ENCODE measurements at regions of chr20 and their contacts with region 1.

Region 1: GRCh38 chr20:63520504-63520933 is at the start of gene PPDPF:
- DNase-seq: peak; percentile 39 to 88
- H3K4me3 ChIP-seq: peak within 1 kb of the TSS; percentile 66 to 99 (median 88)
- H3K27ac ChIP-seq: peak within 1 kb of the TSS; percentile 87
- H3K4me1 ChIP-seq: peaks cover 0 to 21% (median 10%) of the 10 kb centered on the region in 4 experiments; a peak in 5 of 7 replicates
- H3K27me3 ChIP-seq: peaks cover 0 to 6% (median under 1%) of the 10 kb centered on the region in 4 experiments; a peak in 2 of 7 replicates
- CTCF ChIP-seq: no peak
- EP300 ChIP-seq: no peak
- POLR2A ChIP-seq: peak; percentile 70 to 87
- RAD21 ChIP-seq: no peak
- total RNA-seq, gene PPDPF: 125 and 138 TPM in 2 replicates

Region 2: DNA sequence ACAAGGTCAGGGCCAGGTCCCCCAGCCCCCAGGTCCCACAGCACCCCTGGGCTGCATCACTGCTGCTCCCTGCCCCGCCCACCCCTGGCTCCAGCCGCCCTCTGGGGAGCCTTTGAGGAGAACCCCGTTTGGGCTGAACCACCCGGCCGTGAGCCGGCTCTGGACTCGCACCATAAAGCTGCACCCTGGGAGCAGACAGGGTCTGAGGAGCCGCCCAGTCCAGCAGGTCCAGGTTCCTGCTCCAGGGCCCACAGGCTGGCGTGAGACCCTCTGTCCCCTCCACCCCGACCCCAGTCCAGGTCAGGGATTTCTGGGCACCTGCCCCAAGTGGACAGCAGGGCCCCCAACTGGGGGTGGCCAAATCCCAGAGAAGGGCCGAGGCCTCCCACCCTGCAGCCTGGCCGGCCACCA is 167.7 kb before region 1 on chr20:
- CTCF ChIA-PET with region 1: no interaction called
- POLR2A ChIA-PET with region 1: no interaction called
- DNase-seq: no peak
- H3K4me3 ChIP-seq: no peak overlapping the region
- H3K27ac ChIP-seq: no peak overlapping the region; the same call in 1 of the 2 replicates
- H3K4me1 ChIP-seq: peaks cover 0 to 11% (median 8%) of the 10 kb centered on the region in 4 experiments; a peak in 5 of 7 replicates
- H3K27me3 ChIP-seq: no peaks in the 10 kb centered on the region
- CTCF ChIP-seq: no peak
- EP300 ChIP-seq: no peak
- POLR2A ChIP-seq: no peak
- RAD21 ChIP-seq: no peak

Region 3: DNA sequence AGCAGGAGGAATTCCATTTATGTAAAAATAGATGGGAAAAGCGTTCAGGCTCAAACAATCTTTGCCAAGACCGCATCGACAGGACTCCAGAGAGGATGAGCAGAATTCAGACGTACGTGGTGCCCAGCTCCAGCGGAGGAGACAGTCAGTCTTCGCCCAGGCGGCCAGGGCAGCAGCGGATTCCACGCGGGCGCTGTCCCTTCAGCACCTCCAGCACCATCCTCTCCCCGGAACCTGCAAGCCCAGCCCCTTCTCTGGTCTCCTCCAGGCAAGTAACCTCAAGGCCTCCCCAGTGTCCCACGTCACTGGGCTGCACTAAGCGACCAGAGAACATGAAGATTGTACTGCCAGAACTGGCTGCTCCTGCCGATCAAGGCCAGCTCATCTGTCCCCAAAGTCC is 45.3 kb before region 1 on chr20:
- CTCF ChIA-PET with region 1: interaction called, 3 read pairs
- POLR2A ChIA-PET with region 1: interaction called, 10 read pairs
- DNase-seq: no peak
- H3K4me3 ChIP-seq: no peak overlapping the region
- H3K27ac ChIP-seq: no peak overlapping the region
- H3K4me1 ChIP-seq: peaks cover 0 to 21% (median 8%) of the 10 kb centered on the region in 4 experiments; a peak in 6 of 7 replicates
- H3K27me3 ChIP-seq: peaks cover 0 to 16% (median 5%) of the 10 kb centered on the region in 4 experiments; a peak in 4 of 7 replicates
- CTCF ChIP-seq: no peak
- EP300 ChIP-seq: no peak
- POLR2A ChIP-seq: no peak
- RAD21 ChIP-seq: 0 out of 4 replicates have a peak, but pooled peaks of 1 of the 2 experiments have one; percentile 5

Region 4: DNA sequence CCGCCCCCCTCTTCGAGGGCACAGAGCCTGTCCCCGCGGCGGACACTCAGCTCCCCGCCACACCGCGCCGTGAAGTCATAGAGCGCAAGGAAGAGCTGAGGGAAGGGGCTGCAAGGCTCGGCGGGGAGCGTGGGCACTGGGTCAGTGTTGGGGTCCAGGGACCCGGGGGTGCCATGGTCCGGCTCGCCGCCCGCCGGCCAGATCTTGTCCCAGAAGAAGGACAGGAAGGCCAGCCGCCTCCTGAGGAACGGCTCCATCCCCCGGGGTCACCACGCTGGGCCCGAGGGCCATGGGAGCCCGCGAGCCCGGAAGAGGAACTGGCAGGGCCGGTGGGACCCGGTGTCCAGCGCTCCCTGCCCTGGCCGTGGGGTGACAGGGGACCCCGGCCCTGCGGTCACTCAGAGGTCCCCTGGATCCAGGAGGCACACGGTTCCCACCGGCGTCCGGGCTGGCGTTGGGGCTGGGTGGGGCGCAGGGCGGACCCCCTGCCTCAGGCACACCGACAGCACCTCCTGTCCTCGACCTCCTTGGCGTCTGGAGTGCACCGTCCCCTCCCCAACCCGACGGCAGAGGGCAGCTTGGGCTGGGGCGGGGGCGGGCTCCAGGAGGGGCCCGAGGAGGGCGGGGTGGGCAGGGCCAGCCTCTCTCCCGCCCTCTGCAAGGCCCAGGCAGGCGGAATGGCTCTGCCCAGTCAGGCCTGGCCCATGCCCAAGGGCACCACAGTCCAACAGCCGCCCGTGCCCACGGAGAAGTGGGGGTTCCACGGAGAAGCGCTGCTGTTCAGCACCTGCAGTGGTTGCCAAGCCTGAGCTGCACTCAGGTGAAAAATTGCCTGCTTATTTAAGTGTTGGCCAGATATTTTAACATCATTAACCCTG is 26.9 kb after region 1 on chr20 and contains the start of gene SRMS:
- CTCF ChIA-PET with region 1: interaction called, 5 read pairs
- POLR2A ChIA-PET with region 1: interaction called, 10 read pairs
- DNase-seq: no peak
- H3K4me3 ChIP-seq: no peak within 1 kb of the TSS
- H3K27ac ChIP-seq: no peak within 1 kb of the TSS
- H3K4me1 ChIP-seq: peaks cover 0 to 25% (median 8%) of the 10 kb centered on the region in 4 experiments; a peak in 6 of 7 replicates
- H3K27me3 ChIP-seq: no peaks in the 10 kb centered on the region
- CTCF ChIP-seq: no peak
- EP300 ChIP-seq: no peak
- POLR2A ChIP-seq: no peak
- RAD21 ChIP-seq: no peak
- total RNA-seq, gene SRMS: 0.29 and 0.76 TPM in 2 replicates